Cardiac septum (tissue), 1 donor: ENCODE measurements at regions of chr9 and their contacts with region 1.

Region 1: GRCh38 chr9:101235105-101235866 is 149.5 kb downstream of the BAAT start:
- DNase-seq: no peak

Region 2: DNA sequence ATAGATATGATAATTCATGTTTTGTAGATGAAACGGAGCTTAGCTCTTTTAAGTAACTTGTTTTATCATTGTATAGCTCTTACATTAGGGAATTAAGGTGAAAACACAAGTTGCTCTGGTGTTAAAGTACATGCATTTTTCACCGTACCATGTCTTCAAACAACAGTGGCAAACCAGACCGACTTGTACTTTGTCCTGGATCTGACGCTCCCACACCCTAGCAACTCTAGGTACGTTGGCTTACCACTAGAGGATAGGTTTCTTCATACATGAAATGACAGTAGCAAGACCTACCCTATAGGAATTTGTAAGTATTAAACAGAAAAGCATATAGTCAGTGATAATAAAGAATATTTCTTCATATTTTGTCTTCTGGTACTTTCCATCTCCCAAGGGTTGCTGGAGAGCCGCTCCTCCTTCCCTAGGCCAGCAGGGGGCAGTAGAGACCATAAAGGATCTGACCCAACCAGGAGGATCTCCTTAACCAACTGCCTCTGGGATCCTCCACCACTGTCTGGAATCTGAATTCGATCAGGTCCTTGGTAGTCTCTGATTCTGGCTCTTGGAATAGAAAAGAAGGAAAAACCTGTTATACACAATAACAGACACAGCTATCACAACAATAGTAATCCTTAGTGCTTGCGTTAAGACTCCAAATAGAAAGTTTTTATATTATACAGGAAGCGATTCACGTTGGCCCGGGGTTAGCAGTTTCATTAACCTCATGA is 520.8 kb before region 1 on chr9:
- intact Hi-C with region 1: loop called (anchors 10 kb)
- DNase-seq: no peak

Region 3: DNA sequence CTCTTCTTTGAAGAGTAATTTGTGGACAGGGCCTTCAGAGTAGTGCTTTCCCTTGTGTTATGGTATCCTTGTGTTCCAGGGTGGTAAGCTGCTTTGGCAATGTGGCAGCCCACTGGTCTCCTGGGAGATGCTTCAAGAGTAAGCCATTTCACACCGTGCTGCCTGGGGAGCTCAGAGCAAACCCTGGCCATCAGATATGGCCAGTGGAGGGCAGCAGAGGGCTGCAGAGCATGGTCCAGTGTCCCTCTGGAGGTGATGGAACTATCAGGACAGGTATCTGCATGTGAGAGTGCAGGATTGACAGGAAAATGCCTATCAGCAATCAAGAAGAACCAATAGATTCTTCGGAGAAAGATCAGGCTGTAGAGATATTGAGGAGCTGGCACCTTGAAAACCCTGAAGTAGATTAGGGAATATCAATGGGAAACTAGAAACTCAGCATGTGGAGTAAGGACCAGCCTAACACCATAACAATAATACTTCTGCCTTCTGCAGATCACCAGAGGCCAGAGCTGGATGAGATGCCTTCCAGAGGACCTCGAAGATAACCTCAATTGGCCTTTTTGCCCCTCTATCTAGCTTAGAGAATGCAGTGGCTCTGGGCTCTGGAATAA is 116.0 kb before region 1 on chr9:
- intact Hi-C with region 1: loop called (anchors 2 kb)
- DNase-seq: no peak

Region 4: GRCh38 chr9:101201630-101202029 is 33.7 kb before region 1 on chr9:
- intact Hi-C with region 1: no loop called
- DNase-seq: no peak

Region 5: DNA sequence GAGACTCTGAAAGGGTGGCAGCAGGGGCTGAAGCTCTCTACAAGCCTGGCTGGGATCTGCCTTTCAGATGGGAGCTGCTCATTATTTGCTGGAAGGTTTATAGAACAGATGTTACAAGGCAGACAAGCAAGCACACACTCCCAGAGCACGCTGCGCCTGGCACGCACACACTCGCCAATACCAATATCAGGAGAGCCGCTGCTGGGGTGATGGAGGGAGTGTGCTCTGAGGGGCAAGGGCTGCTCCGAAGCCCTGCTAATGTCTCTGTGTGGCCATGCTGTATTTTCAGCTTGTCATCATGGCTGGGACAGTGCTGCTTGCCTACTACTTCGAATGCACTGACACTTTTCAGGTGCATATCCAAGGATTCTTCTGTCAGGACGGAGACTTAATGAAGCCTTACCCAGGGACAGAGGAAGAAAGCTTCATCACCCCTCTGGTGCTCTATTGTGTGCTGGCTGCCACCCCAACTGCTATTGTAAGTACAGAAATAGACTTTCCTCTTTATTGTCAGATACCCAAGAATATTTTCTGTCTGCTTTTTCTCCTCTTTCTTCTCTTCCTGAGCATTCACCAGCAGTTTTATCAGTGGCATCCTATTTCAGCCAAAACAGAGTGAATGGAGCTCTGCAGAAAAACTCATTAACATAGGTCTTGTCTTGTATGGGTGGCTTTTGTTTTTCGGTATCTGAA is 34.5 kb after region 1 on chr9:
- intact Hi-C with region 1: no loop called
- DNase-seq: no peak

Region 6: DNA sequence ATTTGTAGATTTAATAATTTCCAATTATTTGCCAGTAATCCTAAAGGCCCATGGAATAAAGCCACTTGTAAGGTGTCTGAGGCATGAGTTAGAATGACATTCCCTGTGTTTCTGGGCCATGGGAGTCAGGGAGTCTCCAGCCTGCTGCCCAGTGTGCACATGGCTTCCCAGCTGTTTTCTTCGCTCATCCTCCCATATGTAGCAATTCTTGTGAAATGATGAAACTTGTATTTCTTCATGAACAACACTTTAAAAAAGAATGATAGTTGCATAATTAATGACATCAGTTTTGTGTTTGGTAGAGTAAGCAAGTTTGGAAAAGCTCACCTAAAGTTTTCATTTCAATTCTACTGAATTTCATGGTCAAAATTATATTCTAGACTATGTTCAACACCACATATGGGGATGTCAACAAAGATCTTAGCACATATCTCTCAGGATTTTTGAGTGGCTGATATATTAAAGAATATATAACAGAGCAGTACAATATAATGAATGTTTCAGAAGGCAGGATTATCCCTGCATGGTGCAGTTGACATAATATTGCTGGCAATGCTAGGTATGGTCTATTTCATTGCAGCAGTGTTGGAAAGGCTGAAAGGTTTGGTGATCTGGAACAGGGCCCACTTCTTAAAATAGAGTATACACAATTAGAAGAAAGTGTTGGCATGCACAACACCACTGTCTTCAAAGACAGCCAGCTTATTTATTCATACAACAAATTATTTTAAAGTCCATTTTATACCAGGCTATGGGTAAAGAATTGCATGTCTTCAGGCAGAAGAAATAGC is 458.5 kb after region 1 on chr9:
- intact Hi-C with region 1: no loop called
- DNase-seq: no peak